ENCODE measurements at regions of chr10 and their contacts with region 1.

Region 1: GRCh38 chr10:87659571-87660483 is at the start of gene PAPSS2:
- DNase-seq: peak; percentile 57 to 59
- H3K4me3 ChIP-seq: peak within 1 kb of the TSS; percentile 70 to 96 (median 78)
- H3K27ac ChIP-seq: peak within 1 kb of the TSS; percentile 55 to 83 (median 75)
- H3K4me1 ChIP-seq: peaks cover 0 to 19% of the 10 kb centered on the region in 2 donors
- H3K27me3 ChIP-seq: no peaks in the 10 kb centered on the region
- CTCF ChIP-seq: no peak
- POLR2A ChIP-seq: peak in 1 of 2 donors; percentile 65
- total RNA-seq, gene PAPSS2: 25.5 to 32.1 (median 28.8) TPM

Region 2: DNA sequence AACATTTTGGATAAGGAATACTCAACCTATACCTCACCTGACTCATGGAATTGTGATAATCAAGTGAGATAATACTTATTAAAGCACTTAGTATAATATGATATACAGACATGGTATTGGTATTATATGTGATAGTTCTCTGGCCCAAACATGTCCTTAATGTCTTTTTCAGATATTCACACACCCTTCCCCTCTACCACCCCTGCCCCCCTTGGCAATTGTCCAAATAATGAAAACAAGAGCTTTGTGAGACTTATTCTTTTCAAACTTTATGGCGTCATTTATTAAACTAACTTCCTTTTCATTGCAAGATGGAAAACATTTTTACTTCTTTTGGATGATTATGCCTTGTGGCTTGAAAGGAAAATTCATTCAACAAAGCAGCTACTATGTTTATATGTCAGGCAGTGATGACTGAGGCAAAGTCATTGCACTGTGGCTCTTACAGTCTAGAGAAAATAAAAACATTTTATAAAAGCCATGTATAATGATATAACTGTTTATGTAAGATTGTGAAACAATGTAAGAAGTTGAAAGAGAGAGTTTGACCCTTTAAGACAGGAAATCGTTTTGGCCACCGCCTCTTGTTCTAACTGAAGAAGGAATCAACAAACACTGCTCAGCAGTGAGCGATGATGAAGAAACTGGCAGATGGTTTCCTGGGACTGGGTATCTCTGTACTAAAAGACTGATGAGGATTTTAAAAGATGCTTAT is 127.8 kb before region 1 on chr10:
- intact Hi-C with region 1: loop called (anchors 10 kb)
- DNase-seq: no peak
- H3K4me3 ChIP-seq: no peak overlapping the region
- H3K27ac ChIP-seq: peak overlapping the region in 2 of 3 donors; percentile 14 to 52
- H3K4me1 ChIP-seq: no peaks in the 10 kb centered on the region
- H3K27me3 ChIP-seq: no peaks in the 10 kb centered on the region
- CTCF ChIP-seq: no peak
- POLR2A ChIP-seq: no peak

Region 3: DNA sequence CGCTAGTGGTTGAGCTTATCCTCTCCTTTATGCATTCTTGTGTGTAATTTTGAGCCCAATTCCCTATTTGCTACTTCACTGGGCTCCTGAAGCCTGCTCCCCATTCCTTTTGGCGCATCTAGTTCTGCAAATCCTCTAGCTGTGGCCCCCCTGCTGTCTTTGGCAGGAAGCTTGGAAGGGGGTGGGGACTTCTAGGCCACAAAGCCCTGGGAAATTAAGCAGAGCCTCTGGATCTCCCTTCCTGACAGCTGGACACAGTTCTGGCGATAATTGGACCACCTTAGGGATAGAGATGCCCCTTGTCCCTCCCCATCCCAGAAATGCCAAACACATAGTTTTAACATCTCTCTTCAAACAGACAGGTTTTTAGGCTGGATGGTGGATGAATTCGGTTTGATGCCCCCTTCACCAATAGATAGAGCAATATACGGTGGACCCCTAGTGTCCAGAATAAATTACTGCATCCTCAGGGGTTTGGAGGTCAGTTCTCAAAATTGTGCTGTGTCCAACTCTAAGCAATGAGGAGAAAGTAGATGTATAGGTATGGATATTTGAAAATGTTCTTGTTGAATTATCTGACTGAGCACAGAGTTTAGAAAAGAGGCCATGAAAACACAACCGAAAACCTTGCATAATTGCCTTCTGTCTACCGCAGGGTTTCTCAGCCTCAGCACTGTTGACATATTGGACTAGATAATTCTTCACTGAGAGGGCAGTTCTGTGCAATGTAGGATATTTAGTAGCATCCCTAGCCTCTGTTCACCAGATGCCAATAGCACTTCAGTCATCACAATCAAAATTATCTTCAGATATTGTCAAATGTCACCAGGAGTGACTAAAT is 75.4 kb after region 1 on chr10:
- intact Hi-C with region 1: loop called (anchors 5 kb)
- DNase-seq: peak; percentile 48 to 50
- H3K4me3 ChIP-seq: no peak overlapping the region
- H3K27ac ChIP-seq: peak overlapping the region in 2 of 3 donors; percentile 9 to 56
- H3K4me1 ChIP-seq: peaks cover 6% of the 10 kb centered on the region in 2 donors
- H3K27me3 ChIP-seq: no peaks in the 10 kb centered on the region
- CTCF ChIP-seq: peak; percentile 39 to 96 (median 80)
- POLR2A ChIP-seq: no peak

Region 4: DNA sequence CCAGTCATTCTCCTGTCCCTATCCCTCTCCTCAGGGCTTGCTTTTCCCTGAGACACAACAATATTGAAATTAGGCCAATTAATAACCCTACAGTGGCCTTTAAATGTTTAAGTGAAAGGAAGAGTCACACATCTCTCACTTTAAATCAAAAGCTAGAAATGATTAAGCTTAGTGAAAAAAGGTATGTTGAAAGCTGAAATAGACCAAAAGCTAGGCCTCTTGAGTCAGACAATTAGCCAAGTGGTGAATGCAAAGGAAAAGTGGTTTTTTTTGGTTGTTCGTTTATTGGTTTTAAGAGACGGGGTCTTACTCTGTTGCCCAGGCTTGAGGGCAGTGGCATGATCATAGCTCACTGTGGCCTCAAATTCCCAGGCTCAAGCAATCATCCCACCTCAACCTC is 167.9 kb after region 1 on chr10:
- intact Hi-C with region 1: no loop called
- DNase-seq: no peak
- H3K4me3 ChIP-seq: no peak overlapping the region
- H3K27ac ChIP-seq: no peak overlapping the region
- H3K4me1 ChIP-seq: no peaks in the 10 kb centered on the region
- H3K27me3 ChIP-seq: no peaks in the 10 kb centered on the region
- CTCF ChIP-seq: no peak
- POLR2A ChIP-seq: no peak

Measured in thyroid gland (tissue), 4 donors.